SK-N-SH (cell line): ENCODE measurements at regions of chr6 and their contacts with region 1.

Region 1: DNA sequence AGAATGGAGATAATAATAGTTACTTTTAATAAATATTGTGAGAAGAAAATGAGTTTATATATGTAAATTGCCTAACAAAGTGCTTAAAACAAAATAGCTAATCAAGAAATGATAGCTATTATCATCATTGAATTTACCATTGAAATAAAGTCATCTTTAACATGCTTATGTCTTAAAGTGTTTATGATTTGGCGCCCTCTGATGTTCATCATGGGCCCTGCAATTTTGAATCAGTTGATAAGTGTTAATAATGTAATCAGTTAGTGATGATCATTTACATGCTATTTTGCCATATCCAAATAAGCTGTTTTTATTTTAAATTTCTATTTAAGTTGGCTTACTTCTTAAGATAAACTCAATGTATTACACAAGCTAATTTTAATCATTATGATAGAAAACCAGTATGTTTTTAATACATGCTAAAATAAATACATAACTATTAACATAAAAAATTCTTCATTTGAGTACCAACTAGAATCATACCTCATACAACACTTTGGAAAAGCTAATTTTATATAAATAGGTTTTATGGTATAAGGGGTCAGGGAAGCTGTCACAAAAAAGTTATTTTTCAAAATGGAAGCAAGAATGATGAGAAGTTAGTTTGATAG is 39.2 kb upstream of the TPD52L1 start:
- DNase-seq: peak; percentile 30
- H3K4me3 ChIP-seq: no peak overlapping the region; a peak in 1 of 4 replicates
- H3K27ac ChIP-seq: no peak overlapping the region
- H3K4me1 ChIP-seq: no peaks in the 10 kb centered on the region
- H3K27me3 ChIP-seq: no peaks in the 10 kb centered on the region; the same call in 1 of the 2 replicates
- CTCF ChIP-seq: peak; percentile 96
- EP300 ChIP-seq: no peak
- RAD21 ChIP-seq: peak; percentile 63

Region 2: DNA sequence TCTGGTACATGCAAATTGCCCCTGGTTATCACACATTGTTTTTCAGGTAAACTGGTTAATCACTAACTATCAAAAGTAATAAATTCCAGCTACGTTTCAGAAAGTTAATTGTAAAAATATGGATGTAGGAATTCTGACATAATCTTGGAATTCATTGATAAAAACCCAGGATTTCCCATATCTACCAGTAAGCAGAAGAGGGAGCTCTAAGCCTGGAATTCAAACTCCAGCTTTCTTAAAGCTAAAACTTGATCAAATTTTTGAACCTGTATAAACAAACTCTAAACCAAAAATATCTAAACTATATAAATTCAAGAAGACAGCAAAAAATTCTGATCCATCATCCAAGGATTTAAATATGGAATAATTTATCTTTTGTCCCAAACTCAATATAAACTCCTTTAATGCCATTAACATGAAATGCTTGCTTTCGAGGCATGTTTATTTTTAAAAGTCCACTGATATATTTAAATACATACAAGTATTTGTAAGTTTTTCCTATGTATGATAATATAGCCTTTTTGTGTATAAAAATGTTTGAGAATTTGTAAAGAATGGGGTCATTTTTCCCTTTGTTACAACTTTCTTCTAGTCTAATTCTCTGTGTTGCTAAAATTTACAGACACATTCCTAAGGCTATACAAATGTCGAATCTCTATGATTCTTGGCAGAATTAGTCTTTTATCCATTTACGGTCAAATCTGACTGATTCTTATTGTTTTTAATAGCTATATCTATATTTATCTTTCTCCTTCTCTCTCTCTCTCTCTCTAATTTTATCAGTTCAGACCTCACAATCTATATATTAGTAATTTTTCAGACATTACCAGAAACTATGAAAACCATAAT is 243.5 kb before region 1 on chr6:
- CTCF ChIA-PET with region 1: interaction called, 11 read pairs
- POLR2A ChIA-PET with region 1: no interaction called
- DNase-seq: peak; percentile 8
- H3K4me3 ChIP-seq: no peak overlapping the region; a peak in 1 of 4 replicates
- H3K27ac ChIP-seq: no peak overlapping the region
- H3K4me1 ChIP-seq: no peaks in the 10 kb centered on the region
- H3K27me3 ChIP-seq: no peaks in the 10 kb centered on the region; the same call in 1 of the 2 replicates
- CTCF ChIP-seq: peak; percentile 82
- EP300 ChIP-seq: no peak
- RAD21 ChIP-seq: peak; percentile 75

Region 3: DNA sequence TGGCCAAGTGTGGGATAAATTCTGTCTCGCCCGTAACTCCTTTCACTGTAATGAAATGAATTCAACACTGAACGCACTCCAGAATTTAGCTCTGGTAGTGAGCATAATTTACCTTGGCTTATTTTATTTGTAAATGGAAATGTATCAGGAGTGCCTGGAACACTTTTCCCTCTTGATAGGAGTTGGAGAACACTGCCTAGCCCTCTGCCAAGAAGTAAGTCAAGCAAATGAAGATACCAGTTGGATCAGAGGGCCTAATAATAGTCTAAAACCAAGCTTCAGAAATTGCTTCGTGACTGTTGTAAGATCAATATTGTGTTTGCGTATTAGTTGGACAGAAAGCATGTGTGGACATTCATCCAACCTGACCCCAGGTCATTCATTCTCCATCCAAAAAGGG is 25.4 kb before region 1 on chr6:
- CTCF ChIA-PET with region 1: no interaction called
- POLR2A ChIA-PET with region 1: no interaction called
- DNase-seq: no peak
- H3K4me3 ChIP-seq: no peak overlapping the region
- H3K27ac ChIP-seq: no peak overlapping the region
- H3K4me1 ChIP-seq: no peaks in the 10 kb centered on the region
- H3K27me3 ChIP-seq: no peaks in the 10 kb centered on the region; the same call in 1 of the 2 replicates
- CTCF ChIP-seq: no peak
- EP300 ChIP-seq: no peak
- RAD21 ChIP-seq: no peak

Region 4: GRCh38 chr6:125099211-125100073 is 14.9 kb before region 1 on chr6:
- CTCF ChIA-PET with region 1: interaction called, 12 read pairs
- POLR2A ChIA-PET with region 1: no interaction called
- DNase-seq: peak; percentile 61
- H3K4me3 ChIP-seq: peak overlapping the region; percentile 52 to 56
- H3K27ac ChIP-seq: no peak overlapping the region
- H3K4me1 ChIP-seq: peaks cover 4 to 31% of the 10 kb centered on the region in 2 experiments; a peak in 2 of 4 replicates
- H3K27me3 ChIP-seq: no peaks in the 10 kb centered on the region; the same call in 1 of the 2 replicates
- CTCF ChIP-seq: peak; percentile 14; the same call in 1 of the 2 replicates
- EP300 ChIP-seq: no peak
- RAD21 ChIP-seq: no peak